ENCODE measurements at regions of chr17 and their contacts with region 1.

Region 1: DNA sequence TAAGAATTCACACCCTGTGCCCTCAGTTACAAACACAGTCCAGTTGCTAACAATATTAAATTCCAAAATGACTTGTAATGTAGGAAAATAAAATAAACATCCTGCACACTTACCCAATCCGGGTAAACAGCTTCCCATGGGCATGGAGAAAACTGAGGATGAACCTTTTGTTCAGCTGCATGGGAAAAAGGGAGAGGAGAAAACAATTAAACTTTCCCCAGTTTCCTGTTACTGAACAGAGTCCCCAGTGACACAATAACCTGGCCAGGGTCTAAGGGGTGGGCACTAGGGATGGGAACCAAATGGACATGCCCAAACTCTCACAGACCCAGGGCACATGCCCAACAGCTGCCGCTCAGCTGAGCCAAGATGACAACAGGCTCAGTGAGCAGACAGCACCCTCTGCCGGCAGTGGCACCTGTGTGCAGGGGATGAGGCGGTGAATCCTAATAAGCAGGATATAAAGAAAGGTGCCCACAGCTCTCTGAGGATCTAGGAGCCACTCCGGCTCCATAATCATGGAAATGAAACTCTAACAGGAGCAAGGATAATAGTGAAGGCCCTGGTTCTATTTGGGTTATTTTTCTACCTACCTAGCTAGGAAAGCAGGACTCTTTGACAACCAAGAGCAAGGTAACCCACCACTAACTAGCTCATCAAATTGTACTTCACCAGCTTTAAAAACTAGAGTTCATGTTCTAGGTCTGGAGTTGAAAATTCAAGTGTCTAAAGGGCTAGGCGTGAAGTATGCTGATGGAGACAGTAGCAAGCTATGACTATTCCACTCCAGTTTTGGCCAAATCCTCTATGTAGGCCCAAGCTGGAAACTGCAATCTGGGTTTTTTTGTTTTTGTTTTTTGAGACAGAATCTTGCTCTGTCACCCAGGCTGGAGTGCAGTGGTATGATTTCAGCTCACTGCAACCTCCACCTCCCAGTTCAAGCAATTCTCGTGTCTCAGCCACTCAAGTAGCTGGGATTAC is 58.8 kb downstream of the SMG6 start:
- DNase-seq: peak; percentile 65 to 88
- H3K4me3 ChIP-seq: no peak overlapping the region
- H3K4me1 ChIP-seq: no peaks in the 10 kb centered on the region
- H3K27me3 ChIP-seq: no peaks in the 10 kb centered on the region

Region 2: DNA sequence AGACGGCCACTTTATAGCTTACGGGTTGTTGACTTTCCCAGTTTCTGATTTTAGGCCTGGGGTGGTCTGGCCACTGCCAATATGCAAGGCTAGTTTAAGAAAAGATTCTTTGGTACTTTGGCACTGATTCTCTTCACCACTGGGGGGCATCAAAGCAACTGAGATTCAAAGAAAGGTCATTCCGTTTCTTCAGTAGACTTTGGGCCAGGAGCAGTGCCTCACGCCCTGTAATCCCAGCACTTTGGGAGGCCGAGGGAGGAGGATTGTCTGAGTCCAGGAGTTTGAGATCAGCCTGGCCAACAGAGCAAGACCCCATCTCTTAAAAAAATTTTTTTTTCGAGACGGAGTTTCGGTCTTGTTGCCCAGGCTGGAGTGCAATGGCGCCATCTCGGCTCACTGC is 362.0 kb before region 1 on chr17:
- in situ Hi-C with region 1: loop called (anchors 10 kb)
- DNase-seq: peak in 1 of 2 experiments; percentile 52
- H3K4me3 ChIP-seq: no peak overlapping the region
- H3K4me1 ChIP-seq: no peaks in the 10 kb centered on the region
- H3K27me3 ChIP-seq: no peaks in the 10 kb centered on the region

Region 3: DNA sequence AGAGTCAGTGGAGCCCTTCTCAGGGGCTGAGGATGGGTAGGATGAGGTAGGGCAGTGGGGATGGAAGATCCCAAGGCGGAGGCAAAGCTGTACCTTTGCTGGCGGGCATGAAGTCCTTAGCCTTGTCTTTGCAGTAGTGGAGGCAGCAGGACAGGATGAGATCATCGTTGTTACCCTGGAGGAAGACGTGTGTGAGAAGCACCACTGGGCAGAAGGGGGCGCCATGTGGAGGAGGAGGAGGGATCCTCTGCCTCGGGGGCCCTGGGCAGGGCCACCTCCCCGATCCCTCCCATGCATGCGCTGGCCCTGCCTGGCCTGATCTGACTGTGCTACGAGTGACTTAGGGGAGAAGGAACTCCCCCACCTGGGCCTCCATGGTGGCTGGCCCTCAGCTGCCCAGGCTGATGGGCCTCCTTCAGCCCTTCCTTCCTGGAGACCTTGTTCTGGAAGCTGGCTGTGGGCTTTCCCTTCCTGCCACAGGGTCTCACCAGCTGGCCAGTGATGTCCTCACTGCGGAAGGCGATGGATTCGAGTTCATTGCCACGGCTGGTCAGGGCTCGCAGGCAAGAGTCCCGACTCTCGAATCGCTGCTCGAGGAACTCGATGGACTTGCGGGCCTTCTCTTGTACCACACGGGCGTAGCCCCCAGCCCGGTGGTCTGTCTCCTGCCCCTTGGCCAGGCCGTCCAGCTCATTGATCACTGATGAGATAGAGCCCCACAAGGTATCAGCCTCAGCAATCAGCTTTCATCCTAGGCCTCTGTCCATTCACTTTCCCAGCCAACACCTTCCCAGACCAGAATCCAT is 179.7 kb before region 1 on chr17:
- in situ Hi-C with region 1: loop called (anchors 5 kb)
- DNase-seq: peak in 1 of 2 experiments; percentile 79
- H3K4me3 ChIP-seq: no peak overlapping the region
- H3K4me1 ChIP-seq: no peaks in the 10 kb centered on the region
- H3K27me3 ChIP-seq: no peaks in the 10 kb centered on the region

Region 4: GRCh38 chr17:2303204-2304188 is 58.7 kb after region 1 on chr17 and contains the starts of genes SMG6 and SRR:
- in situ Hi-C with region 1: no loop called
- DNase-seq: peak; percentile 87 to 94
- H3K4me3 ChIP-seq: peak within 1 kb of the TSS; percentile 97
- H3K4me1 ChIP-seq: peaks cover 8% of the 10 kb centered on the region
- H3K27me3 ChIP-seq: no peaks in the 10 kb centered on the region

Region 5: GRCh38 chr17:2319051-2319450 is 74.2 kb after region 1 on chr17:
- in situ Hi-C with region 1: no loop called
- DNase-seq: no peak
- H3K4me3 ChIP-seq: no peak overlapping the region
- H3K4me1 ChIP-seq: no peaks in the 10 kb centered on the region
- H3K27me3 ChIP-seq: no peaks in the 10 kb centered on the region

Region 6: DNA sequence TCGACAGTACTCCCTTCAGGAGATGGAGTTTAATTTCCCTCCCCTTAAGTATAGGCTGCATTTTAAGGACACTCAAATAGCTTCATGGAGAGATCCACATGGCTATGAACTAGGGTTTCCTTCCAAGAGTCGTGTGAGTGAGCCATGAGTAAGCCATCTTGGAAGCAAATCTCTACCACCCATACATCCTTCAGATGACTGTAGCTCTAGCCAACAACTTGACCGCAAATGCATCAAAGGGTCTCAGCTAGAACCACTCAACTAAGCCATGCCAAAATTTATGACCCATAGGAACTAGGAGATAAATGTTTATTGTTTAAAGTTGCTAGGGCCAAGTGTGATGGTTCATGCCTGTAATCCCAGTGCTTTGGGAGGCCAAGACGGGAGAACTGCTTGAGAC is 223.4 kb after region 1 on chr17:
- in situ Hi-C with region 1: no loop called
- DNase-seq: no peak
- H3K4me3 ChIP-seq: no peak overlapping the region
- H3K4me1 ChIP-seq: no peaks in the 10 kb centered on the region
- H3K27me3 ChIP-seq: no peaks in the 10 kb centered on the region